ENCODE measurements at regions of chr12 and their contacts with region 1.

Region 1: DNA sequence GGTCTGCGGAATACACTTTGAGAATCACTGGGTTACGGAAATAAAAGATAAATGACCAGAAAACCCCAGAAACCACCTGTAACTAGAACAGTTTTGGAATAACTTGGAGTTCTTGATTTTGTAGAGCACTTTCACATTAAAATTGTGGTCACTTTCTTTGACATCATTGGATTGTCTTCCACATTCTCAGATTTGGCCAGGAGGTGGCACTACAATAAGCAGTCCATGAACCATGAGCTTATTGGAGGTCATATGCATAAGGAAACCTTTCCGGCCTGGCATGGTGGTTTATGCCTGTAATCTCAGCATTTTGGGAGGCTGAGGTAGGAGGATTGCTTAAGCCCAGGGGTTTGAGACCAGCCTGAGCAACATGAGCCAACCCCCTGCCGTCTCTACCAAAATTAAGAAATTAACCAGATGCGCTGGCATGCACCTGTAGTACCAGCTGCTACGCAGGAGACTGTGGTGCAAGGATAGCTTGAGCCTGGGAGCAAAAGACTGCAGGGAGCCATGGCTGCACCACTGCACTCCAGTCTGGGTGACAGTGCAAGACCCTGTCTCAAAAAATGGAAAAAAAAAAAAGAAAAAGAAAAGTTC is 107.7 kb upstream of the CAND1 start:
- DNase-seq: peak; percentile 43
- ATAC-seq: peak; percentile 61
- H3K4me3 Mint-ChIP-seq: no peak overlapping the region
- H3K27ac Mint-ChIP-seq: no peak overlapping the region
- H3K4me1 Mint-ChIP-seq: 0 out of 2 replicates have a peak, but pooled peaks cover 2% of the 10 kb centered on the region
- H3K27me3 Mint-ChIP-seq: no peaks in the 10 kb centered on the region
- CTCF ChIP-seq: peak; percentile 37

Region 2: DNA sequence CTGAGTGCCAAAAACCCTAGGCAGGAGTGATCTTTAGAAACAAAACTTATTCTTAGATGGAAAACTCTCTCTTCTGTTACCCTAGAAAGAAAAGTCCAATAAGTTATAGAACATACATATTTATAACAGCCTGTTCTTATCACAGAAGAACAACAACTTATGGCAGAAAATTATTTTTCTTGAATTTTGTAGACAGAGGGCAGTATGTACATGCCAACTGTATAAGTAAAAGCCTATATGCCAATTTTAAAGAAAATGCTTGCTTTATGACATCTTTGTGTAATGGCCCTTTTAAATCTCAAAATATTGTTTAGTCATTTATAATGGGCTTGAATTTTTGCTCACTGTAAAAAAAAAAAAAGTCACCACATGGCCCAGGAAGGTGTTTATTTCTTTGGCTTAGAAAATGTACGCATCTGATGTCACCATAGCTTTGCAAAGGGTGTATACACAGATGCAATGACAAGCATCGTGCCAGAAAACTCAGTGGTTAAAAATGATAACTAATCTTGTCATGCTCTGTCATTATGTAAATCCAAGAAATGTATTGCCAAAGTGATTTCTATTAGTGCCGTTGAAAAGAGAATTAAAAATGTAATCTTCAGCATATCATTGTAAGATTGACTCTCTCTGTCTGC is 444.3 kb before region 1 on chr12:
- CTCF ChIA-PET with region 1: no interaction called
- POLR2A ChIA-PET with region 1: no interaction called
- DNase-seq: no peak
- ATAC-seq: no peak
- H3K4me3 Mint-ChIP-seq: no peak overlapping the region
- H3K27ac Mint-ChIP-seq: no peak overlapping the region
- H3K4me1 Mint-ChIP-seq: 0 out of 2 replicates have a peak, but pooled peaks cover 2% of the 10 kb centered on the region
- H3K27me3 Mint-ChIP-seq: no peaks in the 10 kb centered on the region
- CTCF ChIP-seq: no peak

Region 3: GRCh38 chr12:67019070-67019469 is 142.3 kb before region 1 on chr12:
- CTCF ChIA-PET with region 1: interaction called, 14 read pairs
- POLR2A ChIA-PET with region 1: no interaction called
- DNase-seq: no peak
- ATAC-seq: peak; percentile 49
- H3K4me3 Mint-ChIP-seq: 0 out of 2 replicates have a peak overlapping the region, but pooled peaks have one; percentile 20
- H3K27ac Mint-ChIP-seq: peak overlapping the region; percentile 44
- H3K4me1 Mint-ChIP-seq: peaks cover 43% of the 10 kb centered on the region
- H3K27me3 Mint-ChIP-seq: no peaks in the 10 kb centered on the region; the same call in 1 of the 2 replicates
- CTCF ChIP-seq: no peak

Region 4: GRCh38 chr12:67141296-67142018 is 20.0 kb before region 1 on chr12:
- CTCF ChIA-PET with region 1: interaction called, 11 read pairs
- POLR2A ChIA-PET with region 1: no interaction called
- DNase-seq: no peak
- ATAC-seq: peak; percentile 87
- H3K4me3 Mint-ChIP-seq: no peak overlapping the region
- H3K27ac Mint-ChIP-seq: no peak overlapping the region
- H3K4me1 Mint-ChIP-seq: peaks cover 5% of the 10 kb centered on the region
- H3K27me3 Mint-ChIP-seq: no peaks in the 10 kb centered on the region; the same call in 1 of the 2 replicates
- CTCF ChIP-seq: no peak

Region 5: DNA sequence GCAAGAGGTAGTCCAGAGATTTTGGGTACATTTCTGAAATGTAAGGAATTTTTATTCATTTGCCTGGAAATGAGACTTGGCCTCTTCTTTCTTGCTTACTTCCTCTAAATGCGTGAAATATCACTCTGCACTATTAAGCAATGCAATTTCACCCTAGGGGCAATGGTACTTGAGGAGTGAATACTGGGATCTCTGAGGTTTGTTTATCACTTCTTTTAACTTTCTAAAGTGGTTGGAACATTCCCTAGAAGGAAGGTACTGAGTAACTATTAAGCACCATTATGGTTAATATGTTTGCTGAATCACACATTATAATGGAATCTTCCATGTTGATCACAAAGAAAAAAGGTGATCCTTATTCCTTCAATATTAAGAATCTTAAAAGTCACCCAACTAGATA is 13.2 kb before region 1 on chr12:
- CTCF ChIA-PET with region 1: interaction called, 26 read pairs
- POLR2A ChIA-PET with region 1: no interaction called
- DNase-seq: no peak
- ATAC-seq: no peak
- H3K4me3 Mint-ChIP-seq: no peak overlapping the region
- H3K27ac Mint-ChIP-seq: no peak overlapping the region
- H3K4me1 Mint-ChIP-seq: no peaks in the 10 kb centered on the region
- H3K27me3 Mint-ChIP-seq: no peaks in the 10 kb centered on the region
- CTCF ChIP-seq: no peak

Region 6: DNA sequence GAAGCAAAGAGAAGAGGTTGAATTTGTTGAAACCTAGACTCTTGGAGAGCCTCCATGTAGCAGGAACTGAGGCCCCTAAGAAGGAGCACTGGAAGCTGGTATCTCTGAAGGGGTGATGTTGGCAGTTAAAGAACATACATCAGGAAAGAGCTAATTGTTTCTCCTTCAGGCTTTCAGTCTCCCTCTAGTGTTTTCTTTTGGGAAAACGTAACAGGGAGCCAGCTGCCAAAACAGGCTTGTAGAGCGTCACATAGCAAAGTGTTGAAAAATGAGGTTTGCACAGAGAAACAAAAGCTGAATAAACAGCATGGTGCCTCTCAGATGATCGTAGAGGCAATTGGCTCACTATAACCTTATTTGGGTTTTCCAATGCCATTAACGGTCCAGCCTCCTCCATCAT is 60.9 kb after region 1 on chr12:
- CTCF ChIA-PET with region 1: interaction called, 44 read pairs
- POLR2A ChIA-PET with region 1: no interaction called
- DNase-seq: no peak
- ATAC-seq: peak; percentile 73
- H3K4me3 Mint-ChIP-seq: no peak overlapping the region
- H3K27ac Mint-ChIP-seq: no peak overlapping the region
- H3K4me1 Mint-ChIP-seq: peaks cover 7% of the 10 kb centered on the region
- H3K27me3 Mint-ChIP-seq: peaks cover under 1% of the 10 kb centered on the region; the same call in 1 of the 2 replicates
- CTCF ChIP-seq: no peak

Measured in WTC11 (cell line).